CD4-positive, alpha-beta memory T cell (primary cell): ENCODE measurements at regions of chr5 and their contacts with region 1.

Region 1: DNA sequence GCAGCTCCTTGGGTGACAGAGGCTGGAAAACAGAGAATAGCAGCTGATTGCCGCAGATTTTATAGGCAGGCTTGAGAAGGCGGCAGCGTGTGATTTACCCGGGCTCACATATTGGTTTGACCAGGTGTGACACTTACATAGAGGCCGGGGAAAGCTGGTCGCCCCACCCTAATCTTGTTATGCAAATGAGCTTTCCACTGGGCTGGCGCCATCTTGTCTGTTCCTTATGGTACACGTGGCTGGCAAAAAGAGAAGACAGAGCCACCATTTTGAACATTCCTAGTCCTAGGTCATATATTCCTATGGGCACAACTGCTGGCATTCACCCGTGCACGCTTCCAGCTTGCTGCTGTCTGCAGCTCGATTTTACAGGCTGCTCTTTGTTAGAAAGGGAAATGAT is 11.3 kb upstream of the SPZ1 start:
- DNase-seq: no peak
- H3K4me3 ChIP-seq: no peak overlapping the region
- H3K4me3 Mint-ChIP-seq: no peak overlapping the region
- H3K27ac ChIP-seq: no peak overlapping the region
- H3K27ac Mint-ChIP-seq: no peak overlapping the region
- H3K4me1 ChIP-seq: no peaks in the 10 kb centered on the region
- H3K4me1 Mint-ChIP-seq: peaks cover 0 to 1% (median 0%) of the 10 kb centered on the region in 4 donors
- H3K27me3 ChIP-seq: no peaks in the 10 kb centered on the region
- H3K27me3 Mint-ChIP-seq: no peaks in the 10 kb centered on the region

Region 2: DNA sequence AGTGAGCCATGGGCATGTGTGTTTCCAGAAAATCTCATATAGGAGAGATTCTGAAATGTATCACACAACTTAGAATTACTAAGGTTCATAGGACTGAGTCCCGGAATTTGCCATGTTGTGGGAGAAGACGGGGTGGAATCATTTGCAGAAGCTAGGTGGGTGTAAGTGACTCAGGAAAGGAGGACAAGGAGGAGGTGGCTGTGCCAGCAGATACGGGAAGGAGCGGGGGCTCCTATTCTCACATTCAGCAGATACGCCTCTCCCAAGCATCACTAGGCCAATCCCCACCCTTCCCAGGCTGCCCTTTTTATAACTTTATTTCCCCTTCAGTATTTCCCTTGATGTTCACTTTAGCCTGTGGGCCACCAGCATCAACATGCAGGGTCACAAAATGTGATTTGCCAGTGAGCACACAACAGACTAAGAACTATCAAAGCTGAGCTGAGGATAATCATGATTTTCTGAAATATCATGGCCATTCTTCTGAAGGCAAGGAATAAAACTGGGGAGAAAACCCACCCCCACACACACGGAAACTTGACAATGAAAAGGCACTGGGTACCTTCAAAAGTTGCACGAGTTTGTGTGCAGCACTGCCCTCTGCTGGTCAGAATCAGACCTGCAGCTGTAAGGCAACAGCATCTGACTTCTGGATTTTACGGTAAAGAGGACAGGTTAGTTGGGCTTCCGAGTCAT is 450.7 kb before region 1 on chr5:
- CTCF ChIA-PET with region 1: interaction called, 6 read pairs
- POLR2A ChIA-PET with region 1: no interaction called
- intact Hi-C with region 1: loop called (anchors 1 kb)
- DNase-seq: peak; percentile 57 to 71 (median 61)
- H3K4me3 ChIP-seq: no peak overlapping the region
- H3K4me3 Mint-ChIP-seq: no peak overlapping the region
- H3K27ac ChIP-seq: no peak overlapping the region
- H3K27ac Mint-ChIP-seq: no peak overlapping the region
- H3K4me1 ChIP-seq: no peaks in the 10 kb centered on the region
- H3K4me1 Mint-ChIP-seq: peaks cover 0 to 4% (median 0%) of the 10 kb centered on the region in 4 donors
- H3K27me3 ChIP-seq: no peaks in the 10 kb centered on the region
- H3K27me3 Mint-ChIP-seq: peaks cover 3 to 6% of the 10 kb centered on the region in 2 donors

Region 3: DNA sequence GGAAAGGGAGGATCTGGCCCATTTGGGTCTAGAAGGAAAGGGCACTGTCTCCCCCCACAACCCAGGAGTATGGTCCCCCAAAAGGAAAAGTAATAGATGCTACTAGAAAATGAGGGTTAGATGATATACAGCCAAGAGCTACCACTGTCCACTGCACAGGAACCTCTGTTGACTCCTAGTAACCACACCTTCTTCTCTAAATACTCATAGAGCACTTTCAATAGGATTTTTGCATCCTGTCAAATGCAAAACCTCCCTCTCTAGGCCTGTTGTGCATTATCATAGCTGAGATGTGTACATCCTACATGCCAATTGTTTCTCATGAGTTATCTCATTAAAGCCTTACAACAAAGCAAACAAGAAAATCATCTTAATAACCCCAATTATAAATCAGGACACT is 206.5 kb before region 1 on chr5:
- CTCF ChIA-PET with region 1: interaction called, 286 read pairs
- POLR2A ChIA-PET with region 1: no interaction called
- intact Hi-C with region 1: no loop called
- DNase-seq: no peak
- H3K4me3 ChIP-seq: no peak overlapping the region
- H3K4me3 Mint-ChIP-seq: no peak overlapping the region
- H3K27ac ChIP-seq: no peak overlapping the region
- H3K27ac Mint-ChIP-seq: peak overlapping the region in 1 of 7 donors; percentile 52
- H3K4me1 ChIP-seq: no peaks in the 10 kb centered on the region
- H3K4me1 Mint-ChIP-seq: peaks cover 12 to 24% (median 17%) of the 10 kb centered on the region in 4 donors
- H3K27me3 ChIP-seq: no peaks in the 10 kb centered on the region
- H3K27me3 Mint-ChIP-seq: no peaks in the 10 kb centered on the region

Region 4: GRCh38 chr5:80284720-80285119 is 23.8 kb before region 1 on chr5:
- CTCF ChIA-PET with region 1: interaction called, 23 read pairs
- POLR2A ChIA-PET with region 1: interaction called, 3 read pairs
- intact Hi-C with region 1: no loop called
- DNase-seq: peak in 3 of 5 donors; percentile 15 to 19 (median 16)
- H3K4me3 ChIP-seq: no peak overlapping the region
- H3K4me3 Mint-ChIP-seq: peak overlapping the region in 3 of 8 donors; percentile 30 to 57 (median 41)
- H3K27ac ChIP-seq: no peak overlapping the region
- H3K27ac Mint-ChIP-seq: peak overlapping the region in 4 of 7 donors; percentile 42 to 81 (median 56)
- H3K4me1 ChIP-seq: no peaks in the 10 kb centered on the region
- H3K4me1 Mint-ChIP-seq: peaks cover 7 to 14% (median 8%) of the 10 kb centered on the region in 4 donors
- H3K27me3 ChIP-seq: no peaks in the 10 kb centered on the region
- H3K27me3 Mint-ChIP-seq: no peaks in the 10 kb centered on the region

Region 5: GRCh38 chr5:80722916-80723315 is 414.4 kb after region 1 on chr5:
- CTCF ChIA-PET with region 1: no interaction called
- POLR2A ChIA-PET with region 1: no interaction called
- intact Hi-C with region 1: no loop called
- DNase-seq: no peak
- H3K4me3 ChIP-seq: no peak overlapping the region
- H3K4me3 Mint-ChIP-seq: no peak overlapping the region
- H3K27ac ChIP-seq: no peak overlapping the region
- H3K27ac Mint-ChIP-seq: no peak overlapping the region
- H3K4me1 ChIP-seq: no peaks in the 10 kb centered on the region
- H3K4me1 Mint-ChIP-seq: peaks cover 0 to 10% (median 5%) of the 10 kb centered on the region in 4 donors
- H3K27me3 ChIP-seq: no peaks in the 10 kb centered on the region
- H3K27me3 Mint-ChIP-seq: no peaks in the 10 kb centered on the region